ENCODE measurements at regions of chr1 and their contacts with region 1.

Region 1: GRCh38 chr1:146012737-146013403 is 8.7 kb downstream of the HJV start:
- DNase-seq: no peak
- H3K4me3 ChIP-seq: no peak overlapping the region
- H3K27ac ChIP-seq: no peak overlapping the region
- H3K4me1 ChIP-seq: no peaks in the 10 kb centered on the region
- H3K27me3 ChIP-seq: no peaks in the 10 kb centered on the region
- CTCF ChIP-seq: peak; percentile 27 to 82 (median 79)
- POLR2A ChIP-seq: no peak

Region 2: GRCh38 chr1:145858894-145859490 is 153.9 kb before region 1 on chr1 and contains the start of gene PIAS3:
- intact Hi-C with region 1: loop called (anchors 10 kb)
- DNase-seq: peak; percentile 93 to 94
- H3K4me3 ChIP-seq: peak within 1 kb of the TSS; percentile 78 to 83 (median 83)
- H3K27ac ChIP-seq: peak within 1 kb of the TSS; percentile 92 to 94
- H3K4me1 ChIP-seq: peaks cover 0 to 10% of the 10 kb centered on the region in 2 donors
- H3K27me3 ChIP-seq: no peaks in the 10 kb centered on the region
- CTCF ChIP-seq: no peak
- POLR2A ChIP-seq: no peak
- total RNA-seq, gene PIAS3: 14.1 to 53.3 (median 31.8) TPM

Region 3: GRCh38 chr1:145906954-145907753 is 105.7 kb before region 1 on chr1:
- intact Hi-C with region 1: no loop called
- DNase-seq: no peak
- H3K4me3 ChIP-seq: no peak overlapping the region
- H3K27ac ChIP-seq: peak overlapping the region in 1 of 2 donors; percentile 19
- H3K4me1 ChIP-seq: no peaks in the 10 kb centered on the region
- H3K27me3 ChIP-seq: no peaks in the 10 kb centered on the region
- CTCF ChIP-seq: no peak
- POLR2A ChIP-seq: no peak

Region 4: GRCh38 chr1:146036965-146037646 is 24.2 kb after region 1 on chr1:
- intact Hi-C with region 1: no loop called
- DNase-seq: peak; percentile 73
- H3K4me3 ChIP-seq: peak overlapping the region; percentile 48 to 87 (median 78)
- H3K27ac ChIP-seq: peak overlapping the region; percentile 96 to 97
- H3K4me1 ChIP-seq: no peaks in the 10 kb centered on the region
- H3K27me3 ChIP-seq: no peaks in the 10 kb centered on the region
- CTCF ChIP-seq: no peak
- POLR2A ChIP-seq: no peak

Measured in breast epithelium (tissue), 4 donors.